Mammary epithelial cell (primary cell): ENCODE measurements at regions of chr11 and their contacts with region 1.

Region 1: GRCh38 chr11:114262681-114263512 is 33.3 kb upstream of the NNMT start:
- DNase-seq: peak; percentile 33
- H3K4me3 ChIP-seq: no peak overlapping the region
- H3K27ac ChIP-seq: no peak overlapping the region
- H3K4me1 ChIP-seq: no peaks in the 10 kb centered on the region
- H3K27me3 ChIP-seq: no peaks in the 10 kb centered on the region
- CTCF ChIP-seq: peak; percentile 67 to 76

Region 2: DNA sequence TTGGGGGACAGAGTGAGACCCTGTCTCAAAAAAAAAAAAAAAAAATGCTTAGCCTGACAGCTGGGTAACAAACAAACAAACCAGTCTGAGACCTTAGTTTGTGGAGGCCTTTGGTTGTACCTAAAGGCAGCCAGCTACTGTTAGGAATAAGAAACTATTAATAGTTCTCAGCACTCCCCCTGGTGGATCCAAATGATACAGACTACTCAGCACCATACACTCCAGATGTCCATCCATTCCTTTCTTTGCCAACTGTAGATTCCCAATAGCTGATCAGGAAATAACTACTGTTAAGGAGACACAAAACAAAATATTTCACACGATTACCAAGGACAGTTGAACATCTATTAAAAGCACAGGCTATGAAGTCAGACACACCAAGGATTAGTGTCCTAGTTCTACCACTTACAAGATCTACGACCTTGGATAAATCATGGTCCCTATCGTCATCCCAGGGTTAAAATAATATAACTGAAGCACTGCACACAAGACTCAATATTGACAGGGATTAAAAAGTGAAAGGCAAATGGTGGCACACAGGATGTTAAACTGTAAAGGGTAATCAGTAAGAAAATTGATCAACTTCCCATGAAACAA is 466.1 kb before region 1 on chr11:
- CTCF ChIA-PET with region 1: interaction called, 3 read pairs
- dilution Hi-C with region 1: loop called (anchors 5 kb)
- in situ Hi-C with region 1: no loop called
- intact Hi-C with region 1: no loop called
- DNase-seq: peak; percentile 40
- H3K4me3 ChIP-seq: no peak overlapping the region
- H3K27ac ChIP-seq: no peak overlapping the region
- H3K4me1 ChIP-seq: no peaks in the 10 kb centered on the region
- H3K27me3 ChIP-seq: no peaks in the 10 kb centered on the region
- CTCF ChIP-seq: peak; percentile 66 to 71

Region 3: DNA sequence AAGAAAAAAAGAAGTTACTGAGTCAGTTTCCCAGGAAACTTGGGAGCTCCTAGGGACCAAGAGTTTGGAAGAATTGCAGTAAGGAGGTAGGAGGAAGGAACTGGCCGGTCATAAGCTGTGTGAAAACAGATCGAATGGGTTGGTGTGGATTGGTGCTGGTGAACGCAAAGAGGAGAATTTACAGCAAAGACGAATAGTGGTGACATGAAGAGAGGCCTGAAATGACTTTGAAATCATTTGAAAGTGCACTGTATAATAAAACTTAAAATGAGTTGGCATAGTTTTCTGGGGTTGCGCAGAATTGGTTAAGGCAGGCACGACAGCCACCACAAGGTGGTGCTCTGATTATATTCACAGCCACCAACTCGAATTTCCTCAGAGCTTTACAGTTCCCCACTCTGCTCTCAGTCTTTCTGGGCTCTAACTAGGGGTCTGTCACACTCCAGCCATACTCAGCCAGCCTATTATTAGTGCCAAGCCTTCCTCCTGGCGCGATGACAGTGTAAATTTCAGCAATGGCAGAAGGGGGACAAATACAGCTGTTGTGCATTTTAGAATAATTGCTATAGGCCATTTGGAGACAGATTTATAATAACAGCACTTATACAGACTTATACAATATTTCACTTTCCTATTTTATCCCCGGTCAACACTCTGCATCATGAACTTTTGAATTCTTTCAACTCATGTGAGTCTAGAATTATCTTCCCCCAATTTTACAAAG is 366.6 kb before region 1 on chr11:
- CTCF ChIA-PET with region 1: interaction called, 7 read pairs
- dilution Hi-C with region 1: no loop called
- in situ Hi-C with region 1: loop called (anchors 5 to 10 kb)
- intact Hi-C with region 1: loop called (anchors 1 kb)
- DNase-seq: no peak
- H3K4me3 ChIP-seq: no peak overlapping the region
- H3K27ac ChIP-seq: no peak overlapping the region
- H3K4me1 ChIP-seq: no peaks in the 10 kb centered on the region
- H3K27me3 ChIP-seq: no peaks in the 10 kb centered on the region
- CTCF ChIP-seq: peak; percentile 68 to 74

Region 4: GRCh38 chr11:113994077-113994954 is 268.6 kb before region 1 on chr11:
- CTCF ChIA-PET with region 1: interaction called, 7 read pairs
- dilution Hi-C with region 1: no loop called
- in situ Hi-C with region 1: no loop called
- intact Hi-C with region 1: loop called (anchors 1 kb)
- DNase-seq: no peak
- H3K4me3 ChIP-seq: no peak overlapping the region
- H3K27ac ChIP-seq: no peak overlapping the region
- H3K4me1 ChIP-seq: no peaks in the 10 kb centered on the region
- H3K27me3 ChIP-seq: no peaks in the 10 kb centered on the region
- CTCF ChIP-seq: peak; percentile 51 to 73

Region 5: GRCh38 chr11:114110952-114111947 is 151.6 kb before region 1 on chr11:
- CTCF ChIA-PET with region 1: no interaction called
- dilution Hi-C with region 1: no loop called
- in situ Hi-C with region 1: no loop called
- intact Hi-C with region 1: no loop called
- DNase-seq: peak; percentile 4
- H3K4me3 ChIP-seq: no peak overlapping the region
- H3K27ac ChIP-seq: no peak overlapping the region
- H3K4me1 ChIP-seq: no peaks in the 10 kb centered on the region
- H3K27me3 ChIP-seq: peaks cover 11% of the 10 kb centered on the region
- CTCF ChIP-seq: no peak

Region 6: GRCh38 chr11:114180301-114181055 is 82.4 kb before region 1 on chr11:
- CTCF ChIA-PET with region 1: no interaction called
- dilution Hi-C with region 1: no loop called
- in situ Hi-C with region 1: no loop called
- intact Hi-C with region 1: loop called (anchors 2 kb)
- DNase-seq: no peak
- H3K4me3 ChIP-seq: no peak overlapping the region
- H3K27ac ChIP-seq: no peak overlapping the region
- H3K4me1 ChIP-seq: no peaks in the 10 kb centered on the region
- H3K27me3 ChIP-seq: no peaks in the 10 kb centered on the region
- CTCF ChIP-seq: peak; percentile 66 to 84

Region 7: GRCh38 chr11:114478768-114479167 is 215.9 kb after region 1 on chr11:
- CTCF ChIA-PET with region 1: no interaction called
- dilution Hi-C with region 1: no loop called
- in situ Hi-C with region 1: no loop called
- intact Hi-C with region 1: no loop called
- DNase-seq: peak; percentile 44
- H3K4me3 ChIP-seq: no peak overlapping the region
- H3K27ac ChIP-seq: no peak overlapping the region
- H3K4me1 ChIP-seq: peaks cover 7% of the 10 kb centered on the region
- H3K27me3 ChIP-seq: no peaks in the 10 kb centered on the region
- CTCF ChIP-seq: no peak